GM12878 (cell line): ENCODE measurements at regions of chr3 and their contacts with region 1.

Region 1: GRCh38 chr3:354432-354831 is 157.9 kb downstream of the CHL1 start:
- DNase-seq: peak; percentile 60
- ATAC-seq: peak; percentile 87
- H3K4me3 ChIP-seq: no peak overlapping the region
- H3K27ac ChIP-seq: no peak overlapping the region
- H3K4me1 ChIP-seq: no peaks in the 10 kb centered on the region
- H3K27me3 ChIP-seq: no peaks in the 10 kb centered on the region
- CTCF ChIP-seq: peak; percentile 72 to 84 (median 76)
- EP300 ChIP-seq: no peak
- POLR2A ChIP-seq: no peak
- RAD21 ChIP-seq: peak; percentile 94

Region 2: GRCh38 chr3:59854-60253 is 294.6 kb before region 1 on chr3:
- CTCF ChIA-PET with region 1: interaction called, 8 read pairs
- POLR2A ChIA-PET with region 1: no interaction called
- RAD21 ChIA-PET with region 1: interaction called, 8 read pairs
- SMC1A ChIA-PET with region 1: interaction called, 15 read pairs
- in situ Hi-C with region 1: no loop called
- intact Hi-C with region 1: no loop called
- DNase-seq: no peak
- ATAC-seq: no peak
- H3K4me3 ChIP-seq: no peak overlapping the region
- H3K27ac ChIP-seq: no peak overlapping the region
- H3K4me1 ChIP-seq: no peaks in the 10 kb centered on the region
- H3K27me3 ChIP-seq: no peaks in the 10 kb centered on the region
- CTCF ChIP-seq: no peak
- EP300 ChIP-seq: no peak
- POLR2A ChIP-seq: no peak
- RAD21 ChIP-seq: no peak

Region 3: DNA sequence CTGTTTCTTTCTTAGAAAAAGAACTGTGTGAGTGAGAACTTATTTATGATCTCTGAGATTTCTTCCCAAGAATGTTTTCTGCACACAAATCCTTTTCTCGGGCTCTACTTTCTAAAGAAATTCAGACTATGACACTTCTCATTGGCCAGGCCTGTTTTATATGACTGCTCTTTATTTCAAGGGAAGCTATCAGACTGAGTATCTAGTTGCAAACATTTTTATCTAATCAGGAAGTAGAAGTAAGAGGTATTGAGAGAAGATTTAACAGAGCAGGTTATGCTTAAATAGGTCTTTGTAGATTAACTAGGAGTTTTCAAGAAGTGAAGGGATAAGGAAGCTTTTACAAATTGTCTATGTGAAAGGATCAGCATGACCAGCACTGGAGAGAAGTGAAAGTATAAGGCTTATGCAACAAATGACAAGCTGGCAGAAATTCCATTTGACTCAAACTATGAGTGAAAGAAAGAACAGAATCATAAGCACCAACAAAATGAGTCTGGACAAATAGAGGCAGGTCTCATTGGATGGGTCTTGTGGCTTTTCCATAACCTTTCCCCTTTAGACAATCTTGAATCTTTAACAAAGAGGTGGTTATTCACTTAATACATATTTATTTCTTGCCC is 229.8 kb before region 1 on chr3:
- CTCF ChIA-PET with region 1: interaction called, 8 read pairs
- POLR2A ChIA-PET with region 1: no interaction called
- RAD21 ChIA-PET with region 1: interaction called, 11 read pairs
- SMC1A ChIA-PET with region 1: interaction called, 17 read pairs
- in situ Hi-C with region 1: no loop called
- intact Hi-C with region 1: no loop called
- DNase-seq: no peak
- ATAC-seq: peak; percentile 88
- H3K4me3 ChIP-seq: no peak overlapping the region
- H3K27ac ChIP-seq: no peak overlapping the region
- H3K4me1 ChIP-seq: no peaks in the 10 kb centered on the region
- H3K27me3 ChIP-seq: no peaks in the 10 kb centered on the region
- CTCF ChIP-seq: no peak
- EP300 ChIP-seq: no peak; a peak in 1 of 4 replicates
- POLR2A ChIP-seq: no peak
- RAD21 ChIP-seq: no peak

Region 4: GRCh38 chr3:197828-198491 is 156.5 kb before region 1 on chr3:
- CTCF ChIA-PET with region 1: interaction called, 30 read pairs
- POLR2A ChIA-PET with region 1: no interaction called
- RAD21 ChIA-PET with region 1: interaction called, 22 read pairs
- SMC1A ChIA-PET with region 1: interaction called, 40 read pairs
- in situ Hi-C with region 1: no loop called
- intact Hi-C with region 1: loop called (anchors 5 kb)
- DNase-seq: no peak
- ATAC-seq: peak; percentile 65
- H3K4me3 ChIP-seq: 0 out of 2 replicates have a peak overlapping the region, but pooled peaks have one; percentile 9
- H3K27ac ChIP-seq: no peak overlapping the region
- H3K4me1 ChIP-seq: no peaks in the 10 kb centered on the region
- H3K27me3 ChIP-seq: peaks cover 0 to 5% of the 10 kb centered on the region in 2 experiments; a peak in 2 of 4 replicates
- CTCF ChIP-seq: no peak
- EP300 ChIP-seq: no peak
- POLR2A ChIP-seq: no peak
- RAD21 ChIP-seq: no peak

Region 5: DNA sequence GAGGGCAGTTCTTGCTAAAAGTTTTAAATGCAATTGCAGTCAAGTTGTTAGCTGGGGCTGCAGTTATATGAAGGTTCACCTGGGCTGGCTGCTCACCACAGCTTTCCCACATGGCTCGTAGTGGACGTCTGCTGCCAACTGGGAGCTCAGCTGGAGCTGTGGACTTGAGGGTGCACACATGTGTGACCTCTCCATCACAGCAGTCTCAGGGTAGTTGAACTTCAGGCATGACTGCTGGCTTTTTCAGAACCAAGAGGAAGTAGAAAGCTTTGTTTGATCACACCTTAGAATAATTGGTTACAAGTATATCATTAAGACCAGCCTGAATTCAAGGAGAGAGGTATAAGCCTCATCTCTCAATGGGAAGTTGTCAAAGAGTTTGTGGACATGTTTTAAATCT is 83.7 kb before region 1 on chr3:
- CTCF ChIA-PET with region 1: interaction called, 43 read pairs
- POLR2A ChIA-PET with region 1: interaction called, 5 read pairs
- RAD21 ChIA-PET with region 1: interaction called, 83 read pairs
- SMC1A ChIA-PET with region 1: interaction called, 25 read pairs
- in situ Hi-C with region 1: no loop called
- intact Hi-C with region 1: no loop called
- DNase-seq: no peak
- ATAC-seq: peak; percentile 72
- H3K4me3 ChIP-seq: no peak overlapping the region
- H3K27ac ChIP-seq: no peak overlapping the region
- H3K4me1 ChIP-seq: no peaks in the 10 kb centered on the region
- H3K27me3 ChIP-seq: no peaks in the 10 kb centered on the region
- CTCF ChIP-seq: no peak
- EP300 ChIP-seq: no peak
- POLR2A ChIP-seq: no peak
- RAD21 ChIP-seq: no peak

Region 6: GRCh38 chr3:318903-319302 is 35.5 kb before region 1 on chr3:
- CTCF ChIA-PET with region 1: interaction called, 6 read pairs
- POLR2A ChIA-PET with region 1: interaction called, 3 read pairs
- RAD21 ChIA-PET with region 1: interaction called, 9 read pairs
- SMC1A ChIA-PET with region 1: interaction called, 11 read pairs
- in situ Hi-C with region 1: no loop called
- intact Hi-C with region 1: no loop called
- DNase-seq: no peak
- ATAC-seq: no peak
- H3K4me3 ChIP-seq: no peak overlapping the region
- H3K27ac ChIP-seq: no peak overlapping the region
- H3K4me1 ChIP-seq: no peaks in the 10 kb centered on the region
- H3K27me3 ChIP-seq: no peaks in the 10 kb centered on the region
- CTCF ChIP-seq: no peak
- EP300 ChIP-seq: no peak
- POLR2A ChIP-seq: no peak
- RAD21 ChIP-seq: no peak